Activated naive CD4-positive, alpha-beta T cell treated with anti-CD3 and anti-CD28 coated beads for 36 hours (primary cell): ENCODE measurements at regions of chr1 and their contacts with region 1.

Region 1: DNA sequence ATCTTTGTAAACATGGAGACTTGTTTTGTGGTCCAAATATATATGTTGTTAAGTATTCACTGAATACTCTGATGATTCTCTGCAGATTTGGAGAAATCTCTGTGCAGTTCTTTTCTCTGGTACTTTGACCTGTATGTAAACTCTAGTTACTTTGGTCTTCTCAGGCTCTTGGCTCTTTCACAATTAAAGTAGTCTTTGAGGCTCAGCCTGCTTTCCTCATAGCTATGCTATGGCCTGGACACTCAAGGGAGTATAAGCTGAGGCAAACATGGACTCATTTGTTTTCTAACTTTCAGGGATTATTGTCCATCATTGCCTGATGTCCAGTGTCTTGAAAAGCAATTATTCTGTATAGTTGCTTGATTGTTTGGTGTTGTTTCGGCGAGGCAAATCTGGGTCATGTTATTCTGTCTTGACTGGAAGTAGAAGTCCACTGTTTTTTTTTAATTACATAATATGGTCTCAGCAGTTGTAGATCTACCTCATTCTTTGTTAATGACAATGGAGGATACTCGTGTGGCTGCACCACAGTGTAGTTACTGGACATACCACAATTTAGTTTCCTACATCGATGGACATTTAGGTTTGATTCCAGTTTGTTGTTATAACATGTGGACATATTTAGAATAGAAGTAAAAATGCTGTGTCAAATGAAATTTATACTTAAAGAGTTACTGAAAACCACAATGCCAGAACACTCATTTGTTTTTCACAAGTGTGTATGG is 9.2 kb downstream of the PTBP2 start:
- DNase-seq: no peak
- H3K4me3 Mint-ChIP-seq: no peak overlapping the region
- H3K27ac Mint-ChIP-seq: no peak overlapping the region
- H3K4me1 Mint-ChIP-seq: peaks cover 37% of the 10 kb centered on the region
- H3K27me3 Mint-ChIP-seq: no peaks in the 10 kb centered on the region

Region 2: GRCh38 chr1:96764469-96764868 is 33.7 kb after region 1 on chr1:
- CTCF ChIA-PET with region 1: no interaction called
- intact Hi-C with region 1: loop called (anchors 5 kb)
- DNase-seq: no peak
- H3K4me3 Mint-ChIP-seq: no peak overlapping the region
- H3K27ac Mint-ChIP-seq: no peak overlapping the region
- H3K4me1 Mint-ChIP-seq: peaks cover 6% of the 10 kb centered on the region
- H3K27me3 Mint-ChIP-seq: no peaks in the 10 kb centered on the region